ENCODE measurements at regions of chr11 and their contacts with region 1.

Region 1: GRCh38 chr11:70202898-70203748 is at the start of gene FADD:
- DNase-seq: peak; percentile 89 to 94
- H3K4me3 ChIP-seq: peak within 1 kb of the TSS; percentile 78
- H3K27ac ChIP-seq: peak within 1 kb of the TSS; percentile 73
- H3K4me1 ChIP-seq: peaks cover 19% of the 10 kb centered on the region
- H3K27me3 ChIP-seq: no peaks in the 10 kb centered on the region
- CTCF ChIP-seq: no peak
- total RNA-seq, gene FADD: 47.8 and 50.5 TPM in 2 replicates

Region 2: GRCh38 chr11:70244698-70245097 is 41.6 kb after region 1 on chr11:
- CTCF ChIA-PET with region 1: no interaction called
- POLR2A ChIA-PET with region 1: interaction called, 4 read pairs
- intact Hi-C with region 1: loop called (anchors 5 kb)
- DNase-seq: peak; percentile 69 to 81
- H3K4me3 ChIP-seq: no peak overlapping the region
- H3K27ac ChIP-seq: peak overlapping the region; percentile 83
- H3K4me1 ChIP-seq: peaks cover 44% of the 10 kb centered on the region
- H3K27me3 ChIP-seq: no peaks in the 10 kb centered on the region
- CTCF ChIP-seq: no peak

Region 3: DNA sequence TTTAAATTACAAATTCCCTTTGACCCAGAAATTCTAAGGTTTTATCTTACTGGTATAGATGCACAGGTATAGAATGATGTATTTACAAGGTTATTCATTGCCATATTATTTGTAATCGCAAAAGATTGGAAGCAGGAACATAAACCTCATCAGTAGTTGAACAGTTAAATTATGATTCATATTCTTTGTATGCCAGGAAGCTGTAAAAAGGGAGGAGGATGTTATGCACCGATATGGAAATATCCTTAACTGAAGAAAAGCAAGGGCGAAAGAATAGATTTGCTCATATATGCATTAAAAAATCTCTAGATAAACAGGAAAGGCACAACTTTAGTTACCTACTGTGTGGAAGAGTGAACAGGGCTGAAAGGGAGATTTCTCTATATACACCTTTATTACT is 104.1 kb after region 1 on chr11:
- CTCF ChIA-PET with region 1: no interaction called
- POLR2A ChIA-PET with region 1: no interaction called
- intact Hi-C with region 1: loop called (anchors 1 kb)
- DNase-seq: peak in 1 of 2 experiments; percentile 71
- H3K4me3 ChIP-seq: no peak overlapping the region
- H3K27ac ChIP-seq: peak overlapping the region; percentile 71
- H3K4me1 ChIP-seq: peaks cover 53% of the 10 kb centered on the region
- H3K27me3 ChIP-seq: no peaks in the 10 kb centered on the region
- CTCF ChIP-seq: no peak

Region 4: GRCh38 chr11:70397983-70398833 is 195.1 kb after region 1 on chr11 and contains the start of gene CTTN:
- CTCF ChIA-PET with region 1: no interaction called
- POLR2A ChIA-PET with region 1: no interaction called
- intact Hi-C with region 1: loop called (anchors 5 kb)
- DNase-seq: peak; percentile 84
- H3K4me3 ChIP-seq: peak within 1 kb of the TSS; percentile 71
- H3K27ac ChIP-seq: peak within 1 kb of the TSS; percentile 88
- H3K4me1 ChIP-seq: peaks cover 43% of the 10 kb centered on the region
- H3K27me3 ChIP-seq: no peaks in the 10 kb centered on the region
- CTCF ChIP-seq: no peak
- total RNA-seq, gene CTTN: 533 and 570 TPM in 2 replicates